ENCODE measurements at regions of chr5 and their contacts with region 1.

Region 1: DNA sequence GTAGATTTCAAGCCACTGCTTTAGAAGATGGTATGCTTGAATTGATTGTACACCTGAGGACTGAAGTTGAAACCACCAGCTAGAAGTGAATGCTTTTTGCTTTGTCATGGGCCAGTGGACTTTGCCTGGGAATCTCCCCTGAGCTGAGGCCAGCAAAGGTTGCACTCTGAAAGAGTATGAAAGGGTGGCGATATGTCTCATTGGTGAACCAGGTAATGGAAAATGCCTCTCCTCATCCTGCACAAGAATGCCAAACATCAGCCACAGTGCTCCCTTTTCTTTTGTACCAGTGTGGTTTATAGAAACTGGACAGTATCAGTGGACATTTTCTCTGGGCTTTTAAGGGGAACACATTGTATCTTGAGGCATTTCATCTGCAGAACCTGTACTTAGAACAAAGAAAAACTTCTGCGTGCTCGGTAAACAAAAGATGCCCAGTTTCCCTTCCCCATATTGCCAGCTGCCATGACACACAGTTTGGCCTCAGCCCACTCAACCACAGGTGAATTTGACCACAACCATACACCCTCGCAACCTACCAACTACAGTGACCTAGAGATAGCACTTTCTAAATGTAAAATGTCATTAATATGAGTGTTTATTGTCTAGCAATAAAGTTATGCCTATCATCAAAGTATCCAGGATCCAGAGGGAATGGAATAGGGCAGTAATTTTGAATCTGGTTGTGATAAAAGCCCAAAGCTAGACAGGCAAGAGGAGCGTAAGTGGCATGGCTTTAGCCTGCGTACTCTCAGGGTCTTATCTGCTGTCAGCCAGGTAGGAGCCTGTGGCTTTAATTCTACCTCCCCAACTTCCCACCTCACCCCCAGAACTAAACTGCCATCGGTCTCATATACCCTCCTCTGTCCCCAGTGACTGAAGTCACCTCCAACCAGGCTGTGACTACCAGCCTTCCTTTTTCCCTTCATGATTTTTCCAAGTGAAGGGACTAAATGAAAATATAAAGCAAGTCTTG is 79.5 kb upstream of the LHFPL2 start:
- DNase-seq: peak; percentile 93
- ATAC-seq: peak; percentile 98
- H3K4me3 ChIP-seq: peak overlapping the region in 2 of 3 experiments; percentile 6 to 33; a peak in 1 of 6 replicates
- H3K27ac ChIP-seq: peak overlapping the region; percentile 87
- H3K4me1 ChIP-seq: peaks cover 34% of the 10 kb centered on the region
- H3K27me3 ChIP-seq: no peaks in the 10 kb centered on the region
- CTCF ChIP-seq: no peak; the same call in 1 of the 2 replicates
- EP300 ChIP-seq: peak; percentile 42 to 92; a peak in 3 of 4 replicates
- POLR2A ChIP-seq: peak in 1 of 2 experiments; percentile 16; a peak in 1 of 4 replicates
- RAD21 ChIP-seq: no peak

Region 2: GRCh38 chr5:78757269-78758053 is 29.4 kb after region 1 on chr5:
- CTCF ChIA-PET with region 1: no interaction called
- POLR2A ChIA-PET with region 1: interaction called, 12 read pairs
- in situ Hi-C with region 1: no loop called
- intact Hi-C with region 1: loop called (anchors 2 kb)
- DNase-seq: peak; percentile 46
- ATAC-seq: peak; percentile 78
- H3K4me3 ChIP-seq: peak overlapping the region; percentile 27 to 47 (median 30); a peak in 5 of 6 replicates
- H3K27ac ChIP-seq: no peak overlapping the region
- H3K4me1 ChIP-seq: peaks cover 59% of the 10 kb centered on the region
- H3K27me3 ChIP-seq: 0 out of 5 replicates have a peak, but pooled peaks cover 2 to 11% of the 10 kb centered on the region in 2 experiments
- CTCF ChIP-seq: 0 out of 2 replicates have a peak, but pooled peaks have one; percentile 4
- EP300 ChIP-seq: no peak
- POLR2A ChIP-seq: no peak
- RAD21 ChIP-seq: no peak

Region 3: GRCh38 chr5:78795757-78796156 is 67.7 kb after region 1 on chr5:
- CTCF ChIA-PET with region 1: no interaction called
- POLR2A ChIA-PET with region 1: no interaction called
- in situ Hi-C with region 1: no loop called
- intact Hi-C with region 1: loop called (anchors 2 kb)
- DNase-seq: peak; percentile 67
- ATAC-seq: peak; percentile 91
- H3K4me3 ChIP-seq: no peak overlapping the region
- H3K27ac ChIP-seq: no peak overlapping the region
- H3K4me1 ChIP-seq: peaks cover 15% of the 10 kb centered on the region
- H3K27me3 ChIP-seq: no peaks in the 10 kb centered on the region
- CTCF ChIP-seq: no peak
- EP300 ChIP-seq: peak in 1 of 2 experiments; percentile 21; a peak in 1 of 4 replicates
- POLR2A ChIP-seq: no peak
- RAD21 ChIP-seq: no peak

Region 4: GRCh38 chr5:79081779-79082178 is 353.7 kb after region 1 on chr5:
- CTCF ChIA-PET with region 1: no interaction called
- POLR2A ChIA-PET with region 1: no interaction called
- in situ Hi-C with region 1: no loop called
- intact Hi-C with region 1: no loop called
- DNase-seq: no peak
- ATAC-seq: no peak
- H3K4me3 ChIP-seq: no peak overlapping the region
- H3K27ac ChIP-seq: no peak overlapping the region
- H3K4me1 ChIP-seq: peaks cover 12% of the 10 kb centered on the region
- H3K27me3 ChIP-seq: no peaks in the 10 kb centered on the region
- CTCF ChIP-seq: no peak
- EP300 ChIP-seq: no peak
- POLR2A ChIP-seq: no peak
- RAD21 ChIP-seq: no peak

Measured in HepG2 (cell line).